Activated CD4-positive, alpha-beta memory T cell treated with anti-CD3 and anti-CD28 coated beads for 36 hours (primary cell): ENCODE measurements at regions of chr12 and their contacts with region 1.

Region 1: DNA sequence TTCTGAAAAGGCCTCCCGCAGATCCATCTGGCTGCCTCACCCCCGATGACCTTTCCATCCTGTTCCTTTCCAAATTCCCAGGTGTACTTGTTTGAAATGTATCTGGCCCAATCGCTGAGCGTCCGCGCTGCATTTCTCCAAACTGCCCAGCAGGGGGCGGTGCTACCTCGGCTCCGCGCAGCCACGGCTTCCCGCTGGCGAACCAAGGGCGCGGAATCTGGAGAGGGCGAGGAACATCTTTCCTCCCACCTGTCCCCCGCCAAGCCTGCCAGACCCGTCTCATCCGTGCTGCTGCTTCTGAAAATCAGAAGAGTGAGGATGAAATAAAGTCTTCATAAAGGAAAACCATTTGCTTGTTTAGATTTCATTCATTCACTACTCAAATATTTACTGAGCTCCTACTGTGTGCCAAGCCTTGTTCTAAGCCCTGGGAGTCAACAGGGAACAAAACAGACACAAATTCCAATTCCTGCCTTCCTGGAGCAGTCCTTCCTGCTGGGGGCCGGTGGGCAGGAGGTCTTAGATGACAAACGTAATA is 16.8 kb upstream of the MYL2 start:
- DNase-seq: peak; percentile 68
- H3K4me3 Mint-ChIP-seq: no peak overlapping the region
- H3K27ac Mint-ChIP-seq: no peak overlapping the region
- H3K4me1 Mint-ChIP-seq: peaks cover 6% of the 10 kb centered on the region
- H3K27me3 Mint-ChIP-seq: peaks cover 17% of the 10 kb centered on the region

Region 2: GRCh38 chr12:110906083-110906482 is 31.1 kb before region 1 on chr12:
- CTCF ChIA-PET with region 1: no interaction called
- POLR2A ChIA-PET with region 1: no interaction called
- intact Hi-C with region 1: no loop called
- DNase-seq: no peak
- H3K4me3 Mint-ChIP-seq: no peak overlapping the region
- H3K27ac Mint-ChIP-seq: no peak overlapping the region
- H3K4me1 Mint-ChIP-seq: peaks cover 3% of the 10 kb centered on the region
- H3K27me3 Mint-ChIP-seq: peaks cover 3% of the 10 kb centered on the region

Region 3: GRCh38 chr12:111010061-111010460 is 72.9 kb after region 1 on chr12:
- CTCF ChIA-PET with region 1: no interaction called
- POLR2A ChIA-PET with region 1: no interaction called
- intact Hi-C with region 1: loop called (anchors 10 kb)
- DNase-seq: no peak
- H3K4me3 Mint-ChIP-seq: no peak overlapping the region
- H3K27ac Mint-ChIP-seq: no peak overlapping the region
- H3K4me1 Mint-ChIP-seq: no peaks in the 10 kb centered on the region
- H3K27me3 Mint-ChIP-seq: peaks cover 20% of the 10 kb centered on the region

Region 4: GRCh38 chr12:111174251-111174960 is 237.2 kb after region 1 on chr12:
- CTCF ChIA-PET with region 1: no interaction called
- POLR2A ChIA-PET with region 1: no interaction called
- intact Hi-C with region 1: loop called (anchors 5 kb)
- DNase-seq: no peak
- H3K4me3 Mint-ChIP-seq: no peak overlapping the region
- H3K27ac Mint-ChIP-seq: no peak overlapping the region
- H3K4me1 Mint-ChIP-seq: no peaks in the 10 kb centered on the region
- H3K27me3 Mint-ChIP-seq: peaks cover 34% of the 10 kb centered on the region

Region 5: GRCh38 chr12:111298582-111299436 is 361.6 kb after region 1 on chr12:
- CTCF ChIA-PET with region 1: interaction called, 10 read pairs
- POLR2A ChIA-PET with region 1: no interaction called
- intact Hi-C with region 1: no loop called
- DNase-seq: peak; percentile 58
- H3K4me3 Mint-ChIP-seq: no peak overlapping the region
- H3K27ac Mint-ChIP-seq: no peak overlapping the region
- H3K4me1 Mint-ChIP-seq: no peaks in the 10 kb centered on the region
- H3K27me3 Mint-ChIP-seq: no peaks in the 10 kb centered on the region

Region 6: GRCh38 chr12:111313833-111314259 is 376.7 kb after region 1 on chr12:
- CTCF ChIA-PET with region 1: interaction called, 9 read pairs
- POLR2A ChIA-PET with region 1: no interaction called
- intact Hi-C with region 1: loop called (anchors 2 kb)
- DNase-seq: peak; percentile 77
- H3K4me3 Mint-ChIP-seq: no peak overlapping the region
- H3K27ac Mint-ChIP-seq: no peak overlapping the region
- H3K4me1 Mint-ChIP-seq: no peaks in the 10 kb centered on the region
- H3K27me3 Mint-ChIP-seq: peaks cover 11% of the 10 kb centered on the region